SK-N-SH (cell line): ENCODE measurements at regions of chr4 and their contacts with region 1.

Region 1: GRCh38 chr4:68175562-68176155 is 46.0 kb upstream of the TMPRSS11F start:
- DNase-seq: peak; percentile 49
- H3K4me3 ChIP-seq: no peak overlapping the region; a peak in 1 of 4 replicates
- H3K27ac ChIP-seq: no peak overlapping the region
- H3K4me1 ChIP-seq: no peaks in the 10 kb centered on the region
- H3K27me3 ChIP-seq: 0 out of 2 replicates have a peak, but pooled peaks cover 5% of the 10 kb centered on the region
- CTCF ChIP-seq: peak; percentile 87
- EP300 ChIP-seq: no peak
- RAD21 ChIP-seq: peak; percentile 84

Region 2: GRCh38 chr4:67983333-67983732 is 192.3 kb before region 1 on chr4:
- CTCF ChIA-PET with region 1: interaction called, 20 read pairs
- POLR2A ChIA-PET with region 1: no interaction called
- DNase-seq: no peak
- H3K4me3 ChIP-seq: no peak overlapping the region
- H3K27ac ChIP-seq: no peak overlapping the region
- H3K4me1 ChIP-seq: no peaks in the 10 kb centered on the region
- H3K27me3 ChIP-seq: peaks cover 10% of the 10 kb centered on the region; the same call in 1 of the 2 replicates
- CTCF ChIP-seq: no peak
- EP300 ChIP-seq: no peak
- RAD21 ChIP-seq: no peak

Region 3: DNA sequence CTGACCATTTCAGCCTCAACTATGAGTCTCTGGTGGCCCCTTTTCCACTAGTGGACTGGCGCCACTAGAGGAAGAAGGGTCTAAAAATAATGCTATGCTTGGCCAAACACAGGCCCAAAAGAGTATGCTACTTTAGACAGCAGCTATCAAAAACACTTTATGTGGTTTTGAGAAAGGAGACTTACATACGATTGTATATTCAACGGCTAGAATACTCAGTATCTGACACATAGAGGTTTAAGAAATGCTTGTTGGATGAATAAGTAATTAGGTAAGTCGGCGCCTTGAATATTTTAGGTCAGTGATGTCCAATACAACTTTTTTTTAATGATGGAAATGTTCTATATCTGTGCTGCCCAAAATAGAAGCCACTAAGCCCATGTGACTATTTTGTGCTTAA is 186.7 kb before region 1 on chr4:
- CTCF ChIA-PET with region 1: interaction called, 20 read pairs
- POLR2A ChIA-PET with region 1: no interaction called
- DNase-seq: no peak
- H3K4me3 ChIP-seq: no peak overlapping the region
- H3K27ac ChIP-seq: peak overlapping the region in 1 of 2 experiments; percentile 20; a peak in 1 of 4 replicates
- H3K4me1 ChIP-seq: no peaks in the 10 kb centered on the region
- H3K27me3 ChIP-seq: no peaks in the 10 kb centered on the region; the same call in 1 of the 2 replicates
- CTCF ChIP-seq: no peak
- EP300 ChIP-seq: no peak
- RAD21 ChIP-seq: no peak

Region 4: DNA sequence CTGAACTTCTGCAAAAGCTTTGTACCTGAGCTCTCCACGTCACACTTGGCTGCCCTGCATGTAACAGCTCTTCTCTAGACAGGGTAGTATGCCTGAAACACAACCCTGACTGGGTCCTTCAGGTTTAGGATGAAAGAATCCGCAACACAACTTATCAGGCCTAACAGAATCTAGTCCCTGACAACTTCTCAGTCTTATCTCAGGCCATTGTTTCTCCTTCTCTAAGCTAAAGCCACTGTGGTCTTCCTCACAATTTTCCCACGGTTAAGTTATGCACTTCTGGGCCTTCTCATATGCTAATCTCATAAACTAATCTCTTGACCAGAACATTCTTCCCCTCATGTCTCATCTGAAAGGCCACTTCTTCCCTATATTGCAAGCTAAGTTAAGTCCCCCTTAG is 80.6 kb after region 1 on chr4:
- CTCF ChIA-PET with region 1: no interaction called
- POLR2A ChIA-PET with region 1: no interaction called
- DNase-seq: no peak
- H3K4me3 ChIP-seq: no peak overlapping the region; a peak in 1 of 4 replicates
- H3K27ac ChIP-seq: no peak overlapping the region
- H3K4me1 ChIP-seq: no peaks in the 10 kb centered on the region
- H3K27me3 ChIP-seq: peaks cover 4% of the 10 kb centered on the region; the same call in 1 of the 2 replicates
- CTCF ChIP-seq: no peak
- EP300 ChIP-seq: no peak
- RAD21 ChIP-seq: no peak